Mammary epithelial cell (primary cell): ENCODE measurements at regions of chr3 and their contacts with region 1.

Region 1: DNA sequence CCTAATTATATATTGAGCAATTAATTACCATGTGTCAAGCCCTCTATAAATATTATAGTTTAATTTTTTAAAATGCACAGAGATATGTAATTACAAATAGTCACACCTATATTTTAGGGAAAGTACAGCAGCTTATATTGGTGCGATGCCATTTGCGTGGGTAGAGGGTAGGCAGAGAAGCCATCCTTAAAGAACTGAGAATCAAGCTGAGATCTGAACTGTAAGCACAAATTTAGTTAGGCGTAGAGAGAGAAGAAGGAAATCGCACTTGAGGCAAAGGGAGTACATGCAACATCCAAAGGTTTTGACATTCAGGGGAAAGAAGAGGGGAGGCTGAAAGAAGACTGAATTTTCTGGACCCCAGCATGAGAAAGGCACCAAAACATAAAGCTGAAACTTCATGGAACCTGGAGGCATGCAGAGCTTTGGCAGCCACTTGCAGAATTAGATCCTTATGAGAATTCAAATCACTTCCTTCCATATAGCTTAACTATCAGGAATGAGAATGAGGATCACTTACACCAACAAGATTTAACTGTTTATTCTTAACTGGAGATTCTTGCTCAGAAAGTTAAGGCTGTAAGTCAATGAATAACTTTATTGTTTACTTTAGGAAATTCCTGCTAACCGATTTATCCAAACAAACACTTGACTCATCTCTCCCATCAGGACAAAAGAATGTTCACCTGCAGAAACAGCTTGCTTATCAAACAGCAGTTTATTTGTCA is 114.3 kb downstream of the TGFBR2 start:
- DNase-seq: peak; percentile 82
- H3K4me3 ChIP-seq: no peak overlapping the region
- H3K27ac ChIP-seq: no peak overlapping the region
- H3K4me1 ChIP-seq: peaks cover 13% of the 10 kb centered on the region
- H3K27me3 ChIP-seq: no peaks in the 10 kb centered on the region
- CTCF ChIP-seq: no peak

Region 2: GRCh38 chr3:30035935-30036567 is 684.7 kb before region 1 on chr3:
- CTCF ChIA-PET with region 1: no interaction called
- dilution Hi-C with region 1: no loop called
- in situ Hi-C with region 1: loop called in 1 of 2 experiments (anchors 10 kb)
- intact Hi-C with region 1: no loop called
- DNase-seq: no peak
- H3K4me3 ChIP-seq: no peak overlapping the region
- H3K27ac ChIP-seq: no peak overlapping the region
- H3K4me1 ChIP-seq: no peaks in the 10 kb centered on the region
- H3K27me3 ChIP-seq: no peaks in the 10 kb centered on the region
- CTCF ChIP-seq: no peak

Region 3: DNA sequence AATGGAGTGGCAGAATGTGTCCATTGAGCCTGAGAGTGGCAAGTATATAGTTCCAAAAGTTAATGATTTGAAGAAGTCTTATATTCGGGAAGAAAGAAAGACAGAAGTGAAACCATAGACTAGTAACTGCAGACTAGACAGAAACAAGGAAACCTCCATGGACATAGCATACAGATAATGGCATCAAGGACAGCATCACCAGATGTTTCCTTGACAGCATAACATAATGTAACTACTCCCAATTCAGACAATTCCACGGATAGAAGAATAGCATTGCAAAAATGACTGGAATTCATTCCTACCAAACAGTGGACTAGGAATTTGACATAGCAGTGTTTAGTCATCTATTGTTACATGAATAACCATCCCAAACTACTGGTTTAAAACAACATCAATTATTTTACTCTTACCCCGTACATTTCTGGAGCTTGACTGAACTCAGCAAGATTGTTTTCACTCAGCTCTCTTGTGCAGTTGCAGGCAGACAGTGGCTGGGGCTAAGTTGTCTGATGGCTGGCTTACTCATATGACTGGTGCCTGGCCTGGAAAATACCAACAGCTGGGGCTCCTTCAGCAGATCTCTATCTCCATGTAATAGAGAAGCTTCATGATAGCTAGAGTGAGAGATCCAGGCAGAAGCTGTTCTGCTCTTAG is 283.4 kb after region 1 on chr3:
- CTCF ChIA-PET with region 1: no interaction called
- dilution Hi-C with region 1: no loop called
- in situ Hi-C with region 1: no loop called
- intact Hi-C with region 1: no loop called
- DNase-seq: peak; percentile 85
- H3K4me3 ChIP-seq: no peak overlapping the region
- H3K27ac ChIP-seq: peak overlapping the region; percentile 46
- H3K4me1 ChIP-seq: peaks cover 26% of the 10 kb centered on the region
- H3K27me3 ChIP-seq: no peaks in the 10 kb centered on the region
- CTCF ChIP-seq: no peak